AG04450 (cell line): ENCODE measurements at regions of chr17 and their contacts with region 1.

Region 1: GRCh38 chr17:40531051-40531991 is 29.9 kb upstream of the TNS4 start:
- DNase-seq: no peak
- H3K4me3 ChIP-seq: no peak overlapping the region
- H3K27ac ChIP-seq: no peak overlapping the region
- H3K27me3 ChIP-seq: no peaks in the 10 kb centered on the region
- CTCF ChIP-seq: no peak

Region 2: GRCh38 chr17:40303009-40303657 is 228.2 kb before region 1 on chr17:
- CTCF ChIA-PET with region 1: interaction called, 14 read pairs
- POLR2A ChIA-PET with region 1: interaction called, 5 read pairs
- DNase-seq: peak; percentile 57
- H3K4me3 ChIP-seq: no peak overlapping the region
- H3K27ac ChIP-seq: no peak overlapping the region
- H3K27me3 ChIP-seq: no peaks in the 10 kb centered on the region
- CTCF ChIP-seq: peak; percentile 73

Region 3: DNA sequence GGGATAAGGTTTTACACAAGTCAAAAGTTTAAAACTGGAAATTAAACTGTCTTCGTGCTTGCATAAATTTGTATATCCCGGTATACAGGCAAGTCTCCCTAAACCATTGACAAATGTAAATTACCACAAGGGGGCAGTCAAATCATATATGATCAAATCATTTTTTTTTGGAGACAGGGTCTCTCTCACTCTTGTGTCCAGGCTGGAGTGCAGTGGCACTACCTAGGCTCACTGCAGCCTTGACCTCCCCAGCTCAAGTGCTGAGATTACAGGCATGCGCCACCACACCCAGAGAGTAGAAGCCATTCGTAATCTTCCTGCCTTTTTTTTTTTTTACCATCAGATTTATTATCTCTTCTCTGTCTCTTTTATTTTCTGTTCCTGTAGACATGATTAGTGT is 132.1 kb before region 1 on chr17:
- CTCF ChIA-PET with region 1: interaction called, 37 read pairs
- POLR2A ChIA-PET with region 1: no interaction called
- DNase-seq: peak; percentile 21
- H3K4me3 ChIP-seq: no peak overlapping the region
- H3K27ac ChIP-seq: no peak overlapping the region
- H3K27me3 ChIP-seq: no peaks in the 10 kb centered on the region
- CTCF ChIP-seq: peak; percentile 64

Region 4: GRCh38 chr17:40450175-40450574 is 81.1 kb before region 1 on chr17:
- CTCF ChIA-PET with region 1: interaction called, 14 read pairs
- POLR2A ChIA-PET with region 1: interaction called, 3 read pairs
- DNase-seq: no peak
- H3K4me3 ChIP-seq: peak overlapping the region; percentile 22; the same call in 1 of the 2 replicates
- H3K27ac ChIP-seq: peak overlapping the region; percentile 85
- H3K27me3 ChIP-seq: no peaks in the 10 kb centered on the region
- CTCF ChIP-seq: peak; percentile 57

Region 5: GRCh38 chr17:40480501-40481003 is 50.8 kb before region 1 on chr17:
- CTCF ChIA-PET with region 1: interaction called, 94 read pairs
- POLR2A ChIA-PET with region 1: interaction called, 133 read pairs
- DNase-seq: no peak
- H3K4me3 ChIP-seq: no peak overlapping the region
- H3K27ac ChIP-seq: no peak overlapping the region
- H3K27me3 ChIP-seq: no peaks in the 10 kb centered on the region
- CTCF ChIP-seq: no peak

Region 6: GRCh38 chr17:40518401-40519121 is 12.8 kb before region 1 on chr17:
- CTCF ChIA-PET with region 1: interaction called, 10 read pairs
- POLR2A ChIA-PET with region 1: interaction called, 6 read pairs
- DNase-seq: no peak
- H3K4me3 ChIP-seq: no peak overlapping the region
- H3K27ac ChIP-seq: no peak overlapping the region
- H3K27me3 ChIP-seq: no peaks in the 10 kb centered on the region
- CTCF ChIP-seq: no peak

Region 7: DNA sequence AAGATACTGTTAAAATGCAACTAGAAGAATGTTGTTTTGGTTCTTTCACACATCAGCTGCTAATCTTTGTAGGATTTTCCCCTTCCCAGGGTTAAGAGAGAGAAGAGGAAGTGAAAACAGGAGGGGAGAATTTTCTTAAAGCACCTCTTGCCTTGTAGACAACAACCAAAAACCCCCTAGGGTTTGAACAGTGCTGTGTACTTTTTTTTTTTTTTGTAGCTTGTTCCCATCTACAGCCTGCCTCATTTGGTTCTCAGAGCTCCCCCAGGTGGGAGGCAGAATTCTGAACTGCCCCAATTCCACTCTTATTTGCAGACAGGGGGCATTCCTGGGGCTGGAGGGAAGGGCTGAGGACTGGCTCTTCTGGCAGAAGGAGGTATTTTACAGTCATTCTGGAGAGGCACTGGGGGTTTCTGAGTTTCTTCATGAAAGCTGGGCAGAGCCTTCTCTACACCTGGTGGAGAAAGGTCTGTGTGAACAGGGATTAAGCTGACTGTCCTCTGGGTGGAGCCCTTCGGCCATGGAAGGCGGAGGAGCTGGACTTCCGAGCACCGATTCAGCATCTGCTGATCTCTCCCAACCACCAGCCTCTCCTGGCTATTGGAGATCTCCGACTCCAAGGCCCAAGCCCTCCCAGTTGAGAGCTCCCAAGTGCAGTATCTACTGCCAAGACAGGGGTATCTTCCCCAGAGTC is 84.1 kb after region 1 on chr17:
- CTCF ChIA-PET with region 1: no interaction called
- POLR2A ChIA-PET with region 1: no interaction called
- DNase-seq: no peak
- H3K4me3 ChIP-seq: no peak overlapping the region
- H3K27ac ChIP-seq: no peak overlapping the region
- H3K27me3 ChIP-seq: peaks cover 37% of the 10 kb centered on the region
- CTCF ChIP-seq: peak; percentile 52